Activated CD4-positive, alpha-beta T cell treated with anti-CD3 and anti-CD28 coated beads, Interleukin-2, amount 10 ng/mL, durations not matched to agents 24 days and 14 days (primary cell): ENCODE measurements at regions of chr6 and their contacts with region 1.

Region 1: GRCh38 chr6:33200219-33201146 is at the starts of genes RXRB and SLC39A7:
- DNase-seq: peak; percentile 99
- H3K4me3 Mint-ChIP-seq: peak within 1 kb of the TSS; percentile 100
- H3K27ac Mint-ChIP-seq: peak within 1 kb of the TSS; percentile 97
- H3K4me1 Mint-ChIP-seq: peaks cover 62% of the 10 kb centered on the region
- H3K27me3 Mint-ChIP-seq: no peaks in the 10 kb centered on the region
- total RNA-seq, gene RXRB: 46.6 and 48.0 TPM in 2 replicates
- total RNA-seq, gene SLC39A7: 61.7 and 63.9 TPM in 2 replicates

Region 2: DNA sequence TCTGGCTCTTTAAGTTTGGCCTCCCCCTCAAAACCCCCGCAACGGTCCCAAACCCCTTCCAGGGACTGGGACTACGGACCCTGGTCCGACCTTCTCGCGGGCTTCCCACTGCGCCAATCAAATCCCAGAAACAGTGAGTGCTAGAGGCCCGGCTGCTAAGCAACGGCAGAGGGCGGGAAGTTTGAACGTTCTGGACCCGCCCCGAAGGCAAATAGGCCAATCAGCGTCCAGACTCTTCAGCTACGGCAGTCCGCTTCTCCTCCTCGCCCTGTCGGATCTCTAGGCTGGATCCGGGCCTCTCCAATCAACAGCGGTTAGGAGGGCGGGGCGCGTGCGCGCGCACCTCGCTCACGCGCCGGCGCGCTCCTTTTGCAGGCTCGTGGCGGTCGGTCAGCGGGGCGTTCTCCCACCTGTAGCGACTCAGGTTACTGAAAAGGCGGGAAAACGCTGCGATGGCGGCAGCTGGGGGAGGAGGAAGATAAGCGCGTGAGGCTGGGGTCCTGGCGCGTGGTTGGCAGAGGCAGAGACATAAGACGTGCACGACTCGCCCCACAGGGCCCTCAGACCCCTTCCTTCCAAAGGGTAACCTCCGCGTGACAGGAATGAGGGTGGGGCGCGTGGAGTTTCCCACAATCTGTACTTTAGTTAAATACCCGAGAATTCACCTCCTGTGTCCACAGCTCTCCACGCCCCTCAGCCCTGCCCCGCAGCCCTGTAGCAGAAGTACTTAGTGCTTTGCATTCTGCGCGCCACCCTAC is 1460.7 kb before region 1 on chr6 and contains the start of gene MSH5:
- intact Hi-C with region 1: loop called (anchors 10 kb)
- DNase-seq: peak; percentile 99
- H3K4me3 Mint-ChIP-seq: peak within 1 kb of the TSS; percentile 98
- H3K27ac Mint-ChIP-seq: peak within 1 kb of the TSS; percentile 93
- H3K4me1 Mint-ChIP-seq: peaks cover 54% of the 10 kb centered on the region
- H3K27me3 Mint-ChIP-seq: no peaks in the 10 kb centered on the region
- total RNA-seq, gene MSH5: 87.8 and 99.6 TPM in 2 replicates

Region 3: GRCh38 chr6:32971581-32972352 is 228.7 kb before region 1 on chr6:
- intact Hi-C with region 1: loop called (anchors 1 kb)
- DNase-seq: peak; percentile 100
- H3K4me3 Mint-ChIP-seq: peak overlapping the region; percentile 94
- H3K27ac Mint-ChIP-seq: peak overlapping the region; percentile 100
- H3K4me1 Mint-ChIP-seq: peaks cover 33% of the 10 kb centered on the region
- H3K27me3 Mint-ChIP-seq: no peaks in the 10 kb centered on the region

Region 4: DNA sequence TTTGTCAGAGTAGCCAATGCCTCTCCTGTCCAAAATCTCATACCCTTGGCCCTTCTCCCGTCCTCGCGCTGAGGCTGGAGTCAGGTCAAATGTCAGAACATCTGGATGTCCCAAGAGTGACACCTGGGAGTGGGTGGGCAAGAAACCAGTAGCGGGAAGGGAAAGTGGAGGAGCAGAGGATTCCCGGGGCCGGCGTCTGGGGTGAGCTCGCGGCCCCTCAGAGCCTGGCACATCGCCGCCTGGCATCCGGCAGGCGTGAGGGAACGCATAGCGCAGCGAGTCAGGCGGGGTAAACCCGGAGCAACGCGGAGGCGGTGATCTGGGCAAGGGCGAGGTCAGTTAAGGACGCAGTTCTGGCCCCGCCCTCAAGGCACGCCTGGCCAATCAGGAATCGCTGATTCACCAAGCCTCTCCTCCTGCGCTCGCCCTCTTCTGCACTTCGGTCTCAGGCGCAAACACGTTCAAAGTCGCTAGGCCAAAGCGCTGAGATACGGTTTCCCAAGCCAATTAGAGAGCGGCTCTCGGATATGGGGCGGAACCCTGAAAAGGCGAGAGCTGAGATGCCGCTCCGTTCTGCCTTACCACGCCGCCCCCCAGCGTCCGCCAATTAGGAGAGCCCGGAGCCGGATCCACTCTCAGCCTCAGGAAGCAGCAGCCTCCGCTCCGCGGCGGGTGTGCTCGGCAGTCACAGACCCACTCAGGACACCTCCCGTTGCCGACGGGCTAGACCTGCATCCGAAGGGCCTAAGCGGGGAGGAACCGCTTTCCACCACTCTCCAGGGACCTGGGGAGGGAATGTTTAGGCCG is 48.6 kb after region 1 on chr6:
- intact Hi-C with region 1: loop called (anchors 1 kb)
- DNase-seq: peak; percentile 98
- H3K4me3 Mint-ChIP-seq: peak overlapping the region; percentile 91
- H3K27ac Mint-ChIP-seq: peak overlapping the region; percentile 94
- H3K4me1 Mint-ChIP-seq: peaks cover 34% of the 10 kb centered on the region
- H3K27me3 Mint-ChIP-seq: peaks cover 4% of the 10 kb centered on the region

Region 5: GRCh38 chr6:33299237-33299944 is 98.9 kb after region 1 on chr6:
- intact Hi-C with region 1: loop called (anchors 1 kb)
- DNase-seq: peak; percentile 98
- H3K4me3 Mint-ChIP-seq: peak overlapping the region; percentile 94
- H3K27ac Mint-ChIP-seq: peak overlapping the region; percentile 99
- H3K4me1 Mint-ChIP-seq: peaks cover 28% of the 10 kb centered on the region
- H3K27me3 Mint-ChIP-seq: peaks cover 2% of the 10 kb centered on the region